H1 (cell line): ENCODE measurements at regions of chr11 and their contacts with region 1.

Region 1: DNA sequence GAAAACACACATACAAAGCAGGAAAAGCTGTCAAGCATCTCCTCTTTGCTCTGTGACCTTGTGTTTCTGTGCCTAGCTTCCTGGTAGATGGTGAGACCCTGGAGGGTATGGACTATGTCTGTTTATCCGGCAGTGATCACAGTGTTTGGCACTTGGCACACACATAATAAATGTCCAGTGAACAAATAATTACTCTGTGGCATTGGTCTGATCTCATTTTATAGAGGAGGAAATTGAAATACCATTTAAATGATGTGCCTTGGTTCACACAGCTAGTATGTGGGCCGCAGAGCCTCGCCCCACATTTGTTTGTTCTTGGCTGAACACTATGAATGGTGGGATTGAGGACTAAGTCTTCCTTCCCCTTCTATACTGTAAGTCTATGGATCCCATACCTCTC is 104.7 kb upstream of the SPON1 start:
- DNase-seq: no peak
- H3K4me3 ChIP-seq: no peak overlapping the region
- H3K27ac ChIP-seq: no peak overlapping the region
- H3K4me1 ChIP-seq: no peaks in the 10 kb centered on the region
- H3K27me3 ChIP-seq: no peaks in the 10 kb centered on the region; a peak in 1 of 7 replicates
- CTCF ChIP-seq: no peak
- EP300 ChIP-seq: no peak
- POLR2A ChIP-seq: no peak
- RAD21 ChIP-seq: no peak

Region 2: GRCh38 chr11:13717331-13717730 is 140.5 kb before region 1 on chr11:
- CTCF ChIA-PET with region 1: no interaction called
- POLR2A ChIA-PET with region 1: no interaction called
- DNase-seq: no peak
- H3K4me3 ChIP-seq: no peak overlapping the region
- H3K27ac ChIP-seq: no peak overlapping the region
- H3K4me1 ChIP-seq: no peaks in the 10 kb centered on the region
- H3K27me3 ChIP-seq: no peaks in the 10 kb centered on the region
- CTCF ChIP-seq: no peak
- EP300 ChIP-seq: no peak
- POLR2A ChIP-seq: no peak
- RAD21 ChIP-seq: no peak

Region 3: DNA sequence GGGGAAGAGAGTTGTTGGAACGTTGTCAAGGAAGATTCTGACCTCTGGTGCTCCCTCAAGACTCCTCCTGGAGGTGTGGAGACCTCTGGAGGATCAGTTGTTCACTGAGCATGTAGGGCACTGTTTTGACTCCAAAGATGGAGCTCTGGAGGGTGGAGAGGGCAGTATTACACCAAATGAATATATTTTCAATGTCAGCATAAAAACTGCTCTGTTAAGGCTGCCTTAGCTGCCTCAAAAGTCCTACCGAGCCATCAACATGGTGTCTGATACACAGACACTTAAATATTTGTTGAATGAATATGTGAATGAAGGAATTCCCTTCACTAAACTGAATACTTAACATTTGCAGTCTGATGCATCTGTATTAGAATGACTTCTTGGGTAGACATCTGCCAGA is 39.5 kb before region 1 on chr11:
- CTCF ChIA-PET with region 1: no interaction called
- POLR2A ChIA-PET with region 1: no interaction called
- DNase-seq: no peak
- H3K4me3 ChIP-seq: no peak overlapping the region
- H3K27ac ChIP-seq: no peak overlapping the region
- H3K4me1 ChIP-seq: no peaks in the 10 kb centered on the region
- H3K27me3 ChIP-seq: no peaks in the 10 kb centered on the region
- CTCF ChIP-seq: no peak
- EP300 ChIP-seq: no peak
- POLR2A ChIP-seq: no peak
- RAD21 ChIP-seq: no peak

Region 4: DNA sequence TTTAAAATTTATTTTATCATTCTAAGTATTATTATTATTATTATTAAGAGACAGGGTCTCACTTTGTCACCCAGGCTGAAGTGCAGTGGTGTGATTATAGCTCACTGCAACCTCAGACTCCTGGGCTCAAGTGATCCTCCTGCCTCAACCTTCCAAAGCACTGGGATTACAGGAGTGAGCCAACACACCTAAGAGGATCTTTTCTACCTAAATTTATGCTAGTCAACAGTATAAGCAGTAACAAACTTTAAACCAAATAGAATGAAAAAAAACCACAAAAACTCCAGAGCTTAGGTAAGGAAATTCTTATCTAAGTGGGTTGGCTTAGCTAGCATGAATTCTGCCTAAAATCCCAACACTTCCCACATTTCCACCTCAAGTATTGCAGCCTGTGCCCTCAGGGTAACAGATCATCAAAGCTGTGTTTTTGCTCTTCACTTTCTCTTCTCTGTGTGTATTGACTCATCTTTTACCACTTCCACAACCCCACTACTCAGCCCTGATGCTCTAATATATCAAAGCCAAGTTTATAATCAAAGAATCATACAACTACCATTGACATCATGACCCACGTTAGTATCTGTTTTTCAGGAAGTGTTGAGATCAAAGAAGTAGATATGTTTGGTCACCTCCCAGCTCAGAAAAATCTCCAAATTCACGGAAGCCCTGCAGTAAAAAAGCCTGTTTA is 11.0 kb after region 1 on chr11:
- CTCF ChIA-PET with region 1: interaction called, 10 read pairs
- POLR2A ChIA-PET with region 1: no interaction called
- DNase-seq: no peak
- H3K4me3 ChIP-seq: no peak overlapping the region
- H3K27ac ChIP-seq: no peak overlapping the region
- H3K4me1 ChIP-seq: peaks cover 0 to 5% (median 1%) of the 10 kb centered on the region in 4 experiments; a peak in 3 of 7 replicates
- H3K27me3 ChIP-seq: no peaks in the 10 kb centered on the region; a peak in 1 of 7 replicates
- CTCF ChIP-seq: no peak
- EP300 ChIP-seq: no peak
- POLR2A ChIP-seq: no peak
- RAD21 ChIP-seq: no peak

Region 5: GRCh38 chr11:13983081-13983751 is 125.4 kb after region 1 on chr11:
- CTCF ChIA-PET with region 1: no interaction called
- POLR2A ChIA-PET with region 1: no interaction called
- DNase-seq: no peak
- H3K4me3 ChIP-seq: no peak overlapping the region
- H3K27ac ChIP-seq: no peak overlapping the region
- H3K4me1 ChIP-seq: no peaks in the 10 kb centered on the region
- H3K27me3 ChIP-seq: no peaks in the 10 kb centered on the region
- CTCF ChIP-seq: no peak
- EP300 ChIP-seq: no peak
- POLR2A ChIP-seq: no peak
- RAD21 ChIP-seq: no peak